ENCODE measurements at regions of chr3 and their contacts with region 1.

Region 1: DNA sequence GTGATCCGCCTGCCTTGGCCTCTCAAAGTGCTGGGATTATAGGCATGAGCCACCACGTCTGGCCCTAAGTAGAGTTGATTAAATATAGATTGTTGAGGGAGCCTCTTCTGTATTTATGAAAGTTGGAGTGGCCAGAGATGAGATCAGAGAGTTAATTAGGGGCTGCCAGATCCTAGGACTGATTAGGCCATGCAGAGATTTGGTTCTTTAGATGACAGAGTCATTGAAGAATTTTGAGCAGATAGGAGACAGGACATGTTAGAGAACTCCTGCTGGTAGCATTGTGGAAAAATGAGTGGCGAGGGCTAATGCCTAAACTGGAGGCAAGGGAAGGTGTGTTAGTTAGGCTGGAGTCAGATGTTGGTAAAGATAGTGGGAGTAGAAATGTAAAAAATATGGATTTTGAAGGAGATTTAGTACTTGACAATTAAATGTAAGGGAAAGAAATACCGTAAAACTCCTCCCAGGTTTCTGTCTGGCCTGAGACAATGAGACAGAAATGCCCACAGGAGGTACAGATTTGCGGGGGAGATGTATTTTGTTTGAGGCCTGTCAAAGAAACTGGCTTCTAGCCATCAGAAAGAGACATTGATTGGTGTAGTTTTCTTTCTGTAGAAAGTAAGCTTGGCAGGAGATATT is 23.4 kb downstream of the SACM1L start:
- DNase-seq: no peak
- CTCF ChIP-seq: no peak

Region 2: GRCh38 chr3:45730409-45731154 is 18.0 kb after region 1 on chr3:
- CTCF ChIA-PET with region 1: interaction called, 11 read pairs
- POLR2A ChIA-PET with region 1: no interaction called
- DNase-seq: peak; percentile 50
- CTCF ChIP-seq: no peak

Region 3: GRCh38 chr3:45864760-45865519 is 152.3 kb after region 1 on chr3:
- CTCF ChIA-PET with region 1: no interaction called
- POLR2A ChIA-PET with region 1: no interaction called
- DNase-seq: no peak
- CTCF ChIP-seq: no peak

Measured in GM10248 (cell line).